Activated naive CD4-positive, alpha-beta T cell treated with anti-CD3 and anti-CD28 coated beads for 36 hours (primary cell): ENCODE measurements at regions of chr9 and their contacts with region 1.

Region 1: GRCh38 chr9:136474974-136475865 is 7.6 kb downstream of the SEC16A start:
- DNase-seq: no peak
- H3K4me3 Mint-ChIP-seq: no peak overlapping the region
- H3K27ac Mint-ChIP-seq: no peak overlapping the region
- H3K4me1 Mint-ChIP-seq: peaks cover 18% of the 10 kb centered on the region
- H3K27me3 Mint-ChIP-seq: no peaks in the 10 kb centered on the region

Region 2: DNA sequence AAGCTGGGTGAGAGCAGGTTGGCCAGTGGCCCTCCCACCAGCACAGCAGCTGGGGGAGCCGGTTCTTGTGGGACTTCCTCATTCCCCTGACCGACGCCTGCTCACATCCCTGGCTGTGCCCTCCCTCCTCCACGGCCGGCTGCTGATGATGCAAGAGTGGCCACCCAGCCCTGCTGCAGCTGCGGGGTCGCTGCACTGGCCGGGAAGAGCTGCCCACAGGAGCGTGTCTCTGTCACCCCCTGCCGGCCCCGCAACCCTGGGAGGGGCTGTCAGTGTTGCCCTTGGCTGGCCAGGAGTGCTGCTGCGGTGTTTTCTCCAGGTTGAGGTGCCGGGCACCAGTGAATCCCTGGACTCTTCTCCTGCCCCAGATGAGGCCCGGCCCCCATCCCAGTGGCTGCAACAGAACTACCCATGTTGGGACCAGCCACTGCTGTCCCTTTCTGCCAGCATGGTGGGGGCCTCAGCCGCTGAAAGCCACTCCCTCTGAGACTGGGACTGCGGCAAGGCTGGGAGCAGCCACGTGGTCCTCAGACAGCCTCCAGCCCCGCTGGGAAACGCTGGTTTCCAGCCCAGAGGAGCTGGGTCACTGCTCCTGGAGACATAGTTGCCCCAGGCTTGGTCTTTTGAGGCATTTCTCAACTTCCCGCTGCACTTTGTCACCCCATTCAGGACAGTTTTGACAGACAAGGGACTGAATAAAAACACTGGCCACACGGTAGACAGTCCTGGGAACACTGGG is 102.5 kb before region 1 on chr9:
- CTCF ChIA-PET with region 1: no interaction called
- intact Hi-C with region 1: no loop called
- DNase-seq: no peak
- H3K4me3 Mint-ChIP-seq: no peak overlapping the region
- H3K27ac Mint-ChIP-seq: no peak overlapping the region
- H3K4me1 Mint-ChIP-seq: no peaks in the 10 kb centered on the region
- H3K27me3 Mint-ChIP-seq: no peaks in the 10 kb centered on the region

Region 3: GRCh38 chr9:136424750-136425362 is 50.4 kb before region 1 on chr9:
- CTCF ChIA-PET with region 1: no interaction called
- intact Hi-C with region 1: loop called (anchors 5 kb)
- DNase-seq: no peak
- H3K4me3 Mint-ChIP-seq: no peak overlapping the region
- H3K27ac Mint-ChIP-seq: no peak overlapping the region
- H3K4me1 Mint-ChIP-seq: no peaks in the 10 kb centered on the region
- H3K27me3 Mint-ChIP-seq: no peaks in the 10 kb centered on the region